ENCODE measurements at regions of chr7 and their contacts with region 1.

Region 1: GRCh38 chr7:151028131-151028947 is at the start of gene ABCB8:
- DNase-seq: peak; percentile 96
- ATAC-seq: peak; percentile 97
- total RNA-seq, gene ABCB8: 24.5 TPM

Region 2: DNA sequence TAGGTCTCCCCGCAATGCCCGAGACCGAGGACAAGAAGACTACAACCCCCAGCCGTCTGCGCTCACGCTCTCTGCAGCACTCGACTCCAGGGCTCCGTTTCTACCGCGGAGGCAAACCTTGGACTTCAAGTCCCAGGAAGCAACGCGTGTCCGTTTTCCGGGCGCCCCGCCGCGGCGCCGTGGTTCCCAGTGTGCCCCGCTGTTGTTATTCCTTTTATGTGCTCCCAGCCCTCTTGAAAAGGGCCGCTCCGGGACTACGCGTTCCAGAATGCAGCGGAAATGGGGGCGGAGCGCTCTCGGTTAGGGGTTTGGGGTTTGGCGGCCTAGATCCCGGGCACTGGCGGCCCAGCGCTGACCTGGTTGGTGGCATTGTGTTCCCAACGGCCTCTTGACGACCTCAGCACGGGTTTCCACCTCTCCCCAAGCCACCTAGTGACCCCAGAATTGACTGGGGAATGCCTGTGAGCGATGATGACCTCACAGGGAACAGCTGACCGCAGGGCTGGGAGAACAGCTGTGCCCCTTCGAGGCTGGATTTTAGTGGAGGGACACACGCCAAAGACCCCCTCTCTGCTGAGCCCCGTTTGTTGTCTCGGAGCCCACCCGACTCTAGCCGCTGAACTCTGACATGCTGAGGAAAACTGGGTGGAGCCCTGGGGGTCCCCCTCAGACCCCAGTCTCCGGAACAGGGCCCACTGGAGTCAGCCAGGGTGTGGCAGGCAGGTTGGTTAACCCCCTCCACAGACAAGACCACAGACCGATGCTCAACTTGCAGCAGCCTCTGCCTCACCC is 29.8 kb after region 1 on chr7:
- intact Hi-C with region 1: loop called (anchors 1 kb)
- DNase-seq: peak; percentile 99
- ATAC-seq: peak; percentile 93

Region 3: DNA sequence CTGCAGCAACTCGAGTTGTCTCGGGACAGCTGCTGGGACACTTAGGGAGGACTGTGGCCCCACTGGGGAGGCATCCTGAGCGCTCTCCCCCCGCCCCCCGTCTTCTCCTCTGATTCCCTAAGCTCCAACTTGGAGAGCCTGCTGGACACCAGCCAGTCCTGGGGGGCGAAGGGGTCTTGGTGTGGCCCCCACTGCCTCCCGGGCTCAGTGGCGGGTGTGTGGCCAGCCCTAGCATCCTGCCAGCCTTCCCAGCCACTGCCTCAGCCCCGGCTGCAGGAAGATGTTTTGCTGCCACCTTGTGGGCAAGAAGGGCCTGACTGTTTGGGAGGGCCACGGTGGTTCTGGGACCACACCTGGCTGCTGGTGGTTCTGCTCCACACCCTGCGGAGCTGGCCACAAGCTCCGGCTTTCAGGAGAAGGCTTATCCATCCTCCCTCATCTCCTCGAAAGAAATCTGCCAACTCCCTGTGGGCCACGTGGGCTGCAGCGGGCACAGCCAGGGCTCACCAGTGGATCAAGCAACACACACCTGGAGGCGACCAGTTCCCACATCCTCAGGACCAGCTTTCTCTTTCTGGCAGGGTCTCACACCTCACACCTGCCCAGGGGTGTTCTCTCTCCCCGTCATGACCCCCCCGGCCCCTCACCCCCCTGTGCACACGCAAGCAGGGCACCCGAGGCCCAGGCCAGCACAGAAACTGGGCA is 82.8 kb after region 1 on chr7:
- intact Hi-C with region 1: loop called (anchors 2 kb)
- DNase-seq: peak; percentile 88
- ATAC-seq: peak; percentile 79